Activated naive CD4-positive, alpha-beta T cell treated with anti-CD3 and anti-CD28 coated beads for 36 hours (primary cell): ENCODE measurements at regions of chr7 and their contacts with region 1.

Region 1: GRCh38 chr7:48497521-48497920 is 326.3 kb downstream of the ABCA13 start:
- DNase-seq: no peak
- H3K4me3 Mint-ChIP-seq: no peak overlapping the region
- H3K27ac Mint-ChIP-seq: no peak overlapping the region
- H3K4me1 Mint-ChIP-seq: no peaks in the 10 kb centered on the region
- H3K27me3 Mint-ChIP-seq: no peaks in the 10 kb centered on the region

Region 2: DNA sequence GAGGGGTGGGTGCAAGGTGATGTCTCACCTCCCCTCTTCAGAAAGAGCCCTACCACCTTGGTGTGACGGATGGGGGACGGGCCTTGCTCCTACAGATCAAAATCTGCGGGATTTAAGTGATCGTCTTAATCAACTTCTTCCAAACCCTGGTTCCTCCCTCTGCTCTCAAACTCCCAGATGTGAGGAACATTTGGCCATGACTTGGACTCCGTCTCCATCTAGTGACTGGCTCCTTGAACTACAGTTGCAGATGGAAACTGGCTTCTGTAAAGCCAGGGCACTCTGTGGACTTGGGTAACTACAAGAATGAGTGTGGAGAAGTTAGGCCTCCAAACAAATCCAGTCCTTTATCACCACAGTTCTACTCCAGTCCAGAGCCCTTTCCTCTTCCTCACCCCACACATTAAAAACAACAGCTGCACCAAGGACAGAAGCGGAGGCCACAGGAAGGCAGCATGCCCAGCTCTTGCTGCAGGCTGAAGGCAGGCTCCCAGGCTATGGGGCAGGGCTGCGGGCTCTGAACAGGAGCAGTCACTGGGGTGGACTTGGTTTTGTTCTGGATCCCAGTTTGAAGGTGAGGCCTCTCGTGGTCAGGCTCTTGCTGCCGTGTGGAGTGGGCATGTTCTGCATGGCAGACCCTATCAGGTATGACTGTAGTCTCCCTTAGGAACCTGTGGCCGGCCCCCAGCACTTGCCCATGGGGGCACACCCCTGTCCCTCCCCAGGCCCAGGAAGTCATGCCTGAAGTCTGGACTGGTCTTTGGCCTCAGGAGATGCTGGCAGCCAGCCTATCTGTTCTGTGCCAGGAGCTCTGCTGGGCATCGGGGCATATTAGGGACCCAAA is 1355.3 kb after region 1 on chr7:
- CTCF ChIA-PET with region 1: no interaction called
- intact Hi-C with region 1: loop called (anchors 5 kb)
- DNase-seq: peak; percentile 46
- H3K4me3 Mint-ChIP-seq: no peak overlapping the region
- H3K27ac Mint-ChIP-seq: no peak overlapping the region
- H3K4me1 Mint-ChIP-seq: no peaks in the 10 kb centered on the region
- H3K27me3 Mint-ChIP-seq: no peaks in the 10 kb centered on the region